HEK293 (cell line): ENCODE measurements at regions of chr14 and their contacts with region 1.

Region 1: DNA sequence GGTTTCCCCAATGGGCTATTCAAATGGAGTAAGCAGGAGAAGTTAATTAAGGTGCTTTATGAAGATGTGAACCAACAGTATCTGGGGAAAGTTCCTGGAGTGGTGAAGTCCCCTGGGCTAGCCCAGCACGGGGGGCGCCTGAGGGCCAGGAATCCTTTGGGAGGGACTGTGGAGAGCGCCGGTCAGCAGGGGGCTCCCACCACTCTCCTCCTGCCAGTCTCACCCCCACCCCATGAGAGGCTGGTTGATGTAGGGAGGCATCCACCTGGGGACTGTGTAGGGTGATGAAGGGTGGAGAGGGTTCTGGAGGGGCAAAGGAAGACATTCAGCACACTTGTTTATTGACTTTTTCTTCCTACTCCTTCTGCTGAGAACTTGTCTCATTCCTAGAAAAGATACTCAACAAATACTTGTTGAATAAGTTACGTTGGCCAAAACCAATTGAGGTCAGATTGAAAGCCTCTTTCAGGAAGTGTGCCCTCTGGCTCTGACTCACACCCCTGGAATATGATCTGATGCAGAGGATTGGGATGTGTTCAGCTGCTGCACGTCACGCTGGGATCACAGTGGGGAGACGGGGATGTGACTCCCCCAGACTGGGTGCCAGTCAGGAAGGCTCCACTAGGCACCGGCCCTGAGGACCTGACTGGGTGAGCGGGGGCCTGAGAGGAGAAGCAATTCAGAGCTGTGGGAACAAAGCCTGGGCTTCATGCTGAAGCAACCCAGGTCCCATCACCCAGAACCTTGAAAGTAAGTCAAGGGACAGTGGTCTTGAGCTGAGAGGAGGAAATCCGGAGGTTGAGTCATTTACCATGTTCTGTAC is 4.2 kb downstream of the CEBPE start:
- H3K4me3 ChIP-seq: no peak overlapping the region
- H3K27ac ChIP-seq: no peak overlapping the region
- H3K4me1 ChIP-seq: no peaks in the 10 kb centered on the region; the same call in 1 of the 2 replicates
- CTCF ChIP-seq: peak; percentile 43

Region 2: GRCh38 chr14:23076785-23077408 is 38.0 kb before region 1 on chr14:
- CTCF ChIA-PET with region 1: interaction called, 18 read pairs
- POLR2A ChIA-PET with region 1: no interaction called
- H3K4me3 ChIP-seq: no peak overlapping the region
- H3K27ac ChIP-seq: no peak overlapping the region
- H3K4me1 ChIP-seq: peaks cover 6% of the 10 kb centered on the region; the same call in 1 of the 2 replicates
- CTCF ChIP-seq: no peak

Region 3: GRCh38 chr14:23154964-23155587 is 40.2 kb after region 1 on chr14:
- CTCF ChIA-PET with region 1: no interaction called
- POLR2A ChIA-PET with region 1: interaction called, 11 read pairs
- H3K4me3 ChIP-seq: no peak overlapping the region
- H3K27ac ChIP-seq: no peak overlapping the region
- H3K4me1 ChIP-seq: peaks cover 2% of the 10 kb centered on the region; the same call in 1 of the 2 replicates
- CTCF ChIP-seq: no peak

Region 4: GRCh38 chr14:23335623-23336022 is 220.7 kb after region 1 on chr14:
- CTCF ChIA-PET with region 1: no interaction called
- POLR2A ChIA-PET with region 1: no interaction called
- H3K4me3 ChIP-seq: no peak overlapping the region
- H3K27ac ChIP-seq: no peak overlapping the region
- H3K4me1 ChIP-seq: no peaks in the 10 kb centered on the region
- CTCF ChIP-seq: no peak